Caco-2 (cell line): ENCODE measurements at regions of chr4 and their contacts with region 1.

Region 1: GRCh38 chr4:37780444-37781150 is 45.9 kb upstream of the PGM2 start:
- DNase-seq: peak in 1 of 2 experiments; percentile 25
- H3K4me3 ChIP-seq: no peak overlapping the region
- H3K4me3 Mint-ChIP-seq: no peak overlapping the region
- H3K27ac Mint-ChIP-seq: no peak overlapping the region
- H3K4me1 ChIP-seq: peaks cover 9% of the 10 kb centered on the region; the same call in 1 of the 2 replicates
- H3K4me1 Mint-ChIP-seq: no peaks in the 10 kb centered on the region
- H3K27me3 ChIP-seq: no peaks in the 10 kb centered on the region
- H3K27me3 Mint-ChIP-seq: no peaks in the 10 kb centered on the region
- CTCF ChIP-seq: peak in 1 of 2 experiments; percentile 22

Region 2: DNA sequence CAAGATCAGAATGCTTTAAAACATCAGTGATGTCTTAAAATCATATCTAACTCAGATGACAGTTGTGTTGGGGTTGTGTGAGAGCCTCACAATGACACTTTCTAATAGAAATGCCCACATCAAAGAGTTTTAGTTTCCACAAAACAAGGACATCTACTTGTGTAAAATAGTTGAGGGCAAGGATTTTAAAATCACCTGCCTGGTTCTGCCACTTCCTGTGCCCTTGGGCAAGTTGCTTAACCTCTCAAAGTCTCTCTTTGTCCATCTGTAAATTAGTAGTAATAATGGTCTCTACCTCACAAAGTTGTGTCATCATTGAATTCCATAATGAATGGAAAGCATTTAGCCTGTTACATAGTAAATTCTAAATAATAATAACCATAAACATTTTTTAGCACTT is 52.5 kb before region 1 on chr4:
- CTCF ChIA-PET with region 1: interaction called, 6 read pairs
- POLR2A ChIA-PET with region 1: no interaction called
- intact Hi-C with region 1: loop called (anchors 2 kb)
- DNase-seq: no peak
- H3K4me3 ChIP-seq: no peak overlapping the region
- H3K4me3 Mint-ChIP-seq: no peak overlapping the region
- H3K27ac Mint-ChIP-seq: no peak overlapping the region
- H3K4me1 ChIP-seq: peaks cover 31% of the 10 kb centered on the region
- H3K4me1 Mint-ChIP-seq: peaks cover 36% of the 10 kb centered on the region
- H3K27me3 ChIP-seq: no peaks in the 10 kb centered on the region
- H3K27me3 Mint-ChIP-seq: no peaks in the 10 kb centered on the region
- CTCF ChIP-seq: no peak